A673 (cell line): ENCODE measurements at regions of chr6 and their contacts with region 1.

Region 1: GRCh38 chr6:36885461-36886401 is at the start of gene C6orf89:
- DNase-seq: peak; percentile 99
- H3K4me3 ChIP-seq: peak within 1 kb of the TSS; percentile 72
- H3K27ac ChIP-seq: peak within 1 kb of the TSS; percentile 88
- H3K4me1 ChIP-seq: peaks cover 6% of the 10 kb centered on the region
- H3K27me3 ChIP-seq: no peaks in the 10 kb centered on the region
- CTCF ChIP-seq: peak; percentile 88
- total RNA-seq, gene C6orf89: 22.6 and 27.1 TPM in 2 replicates

Region 2: GRCh38 chr6:36793913-36794712 is 91.6 kb before region 1 on chr6:
- CTCF ChIA-PET with region 1: no interaction called
- POLR2A ChIA-PET with region 1: interaction called, 17 read pairs
- intact Hi-C with region 1: no loop called
- DNase-seq: no peak
- H3K4me3 ChIP-seq: no peak overlapping the region
- H3K27ac ChIP-seq: no peak overlapping the region
- H3K4me1 ChIP-seq: peaks cover under 1% of the 10 kb centered on the region
- H3K27me3 ChIP-seq: no peaks in the 10 kb centered on the region
- CTCF ChIP-seq: no peak

Region 3: GRCh38 chr6:36874443-36875249 is 11.1 kb before region 1 on chr6 and contains the start of gene PPIL1:
- CTCF ChIA-PET with region 1: interaction called, 12 read pairs
- POLR2A ChIA-PET with region 1: no interaction called
- intact Hi-C with region 1: loop called (anchors 1 kb)
- DNase-seq: peak; percentile 96
- H3K4me3 ChIP-seq: peak within 1 kb of the TSS; percentile 75
- H3K27ac ChIP-seq: peak within 1 kb of the TSS; percentile 97
- H3K4me1 ChIP-seq: peaks cover 14% of the 10 kb centered on the region
- H3K27me3 ChIP-seq: no peaks in the 10 kb centered on the region
- CTCF ChIP-seq: no peak
- total RNA-seq, gene PPIL1: 67.7 and 72.0 TPM in 2 replicates

Region 4: GRCh38 chr6:36985808-36986703 is 100.3 kb after region 1 on chr6 and contains the start of gene MTCH1:
- CTCF ChIA-PET with region 1: no interaction called
- POLR2A ChIA-PET with region 1: no interaction called
- intact Hi-C with region 1: loop called (anchors 1 kb)
- DNase-seq: peak; percentile 91
- H3K4me3 ChIP-seq: peak within 1 kb of the TSS; percentile 99
- H3K27ac ChIP-seq: peak within 1 kb of the TSS; percentile 99
- H3K4me1 ChIP-seq: peaks cover 14% of the 10 kb centered on the region
- H3K27me3 ChIP-seq: no peaks in the 10 kb centered on the region
- CTCF ChIP-seq: no peak
- total RNA-seq, gene MTCH1: 219 and 242 TPM in 2 replicates

Region 5: GRCh38 chr6:37018198-37019064 is 132.7 kb after region 1 on chr6:
- CTCF ChIA-PET with region 1: interaction called, 12 read pairs
- POLR2A ChIA-PET with region 1: no interaction called
- intact Hi-C with region 1: loop called (anchors 1 kb)
- DNase-seq: peak; percentile 89
- H3K4me3 ChIP-seq: no peak overlapping the region
- H3K27ac ChIP-seq: no peak overlapping the region
- H3K4me1 ChIP-seq: no peaks in the 10 kb centered on the region
- H3K27me3 ChIP-seq: no peaks in the 10 kb centered on the region
- CTCF ChIP-seq: peak; percentile 87